ENCODE measurements at regions of chr20 and their contacts with region 1.

Region 1: GRCh38 chr20:64083378-64083803 is 807 bp downstream of the LKAAEAR1 start:
- DNase-seq: peak; percentile 59 to 97 (median 80)

Region 2: DNA sequence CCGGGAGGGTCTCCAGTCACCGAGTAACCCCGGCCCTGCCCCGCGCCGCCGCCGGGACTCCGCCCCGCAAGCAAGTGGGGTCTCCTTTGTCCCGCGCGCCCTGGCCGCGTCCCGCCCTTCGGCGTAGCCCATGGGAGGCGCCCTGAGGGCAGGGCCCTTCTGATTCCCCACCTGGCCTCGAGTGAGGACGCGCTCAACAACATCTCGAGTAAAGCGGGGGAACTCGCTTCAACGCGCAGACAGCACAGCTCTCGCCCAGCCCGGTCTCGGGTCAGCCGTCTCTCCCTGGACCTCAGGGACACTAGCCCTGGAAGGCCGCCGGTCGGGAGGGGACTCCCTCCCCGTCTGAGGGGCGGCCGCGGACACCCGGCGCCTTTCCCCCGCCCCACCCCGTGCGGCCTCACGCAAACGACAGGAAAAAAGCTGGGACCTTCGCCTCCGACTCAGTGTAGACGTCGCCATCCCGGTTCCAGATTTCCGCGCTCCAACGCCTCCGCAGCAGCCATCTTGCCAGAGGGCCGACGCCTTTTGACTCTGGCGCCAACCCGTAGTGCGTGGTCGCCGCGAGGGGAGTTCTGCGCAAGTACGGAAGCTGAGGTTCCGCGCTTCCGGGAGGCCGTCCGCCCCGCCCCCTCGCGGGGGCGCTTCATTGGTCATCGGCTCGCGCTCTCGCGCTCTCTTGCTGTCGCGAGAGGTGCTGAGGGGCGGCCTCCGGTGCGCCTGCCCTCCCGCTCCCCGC is 1145.9 kb before region 1 on chr20:
- intact Hi-C with region 1: no loop called
- DNase-seq: peak; percentile 87 to 99 (median 92)

Region 3: GRCh38 chr20:64053841-64054661 is 29.3 kb before region 1 on chr20:
- intact Hi-C with region 1: no loop called
- DNase-seq: no peak

Region 4: DNA sequence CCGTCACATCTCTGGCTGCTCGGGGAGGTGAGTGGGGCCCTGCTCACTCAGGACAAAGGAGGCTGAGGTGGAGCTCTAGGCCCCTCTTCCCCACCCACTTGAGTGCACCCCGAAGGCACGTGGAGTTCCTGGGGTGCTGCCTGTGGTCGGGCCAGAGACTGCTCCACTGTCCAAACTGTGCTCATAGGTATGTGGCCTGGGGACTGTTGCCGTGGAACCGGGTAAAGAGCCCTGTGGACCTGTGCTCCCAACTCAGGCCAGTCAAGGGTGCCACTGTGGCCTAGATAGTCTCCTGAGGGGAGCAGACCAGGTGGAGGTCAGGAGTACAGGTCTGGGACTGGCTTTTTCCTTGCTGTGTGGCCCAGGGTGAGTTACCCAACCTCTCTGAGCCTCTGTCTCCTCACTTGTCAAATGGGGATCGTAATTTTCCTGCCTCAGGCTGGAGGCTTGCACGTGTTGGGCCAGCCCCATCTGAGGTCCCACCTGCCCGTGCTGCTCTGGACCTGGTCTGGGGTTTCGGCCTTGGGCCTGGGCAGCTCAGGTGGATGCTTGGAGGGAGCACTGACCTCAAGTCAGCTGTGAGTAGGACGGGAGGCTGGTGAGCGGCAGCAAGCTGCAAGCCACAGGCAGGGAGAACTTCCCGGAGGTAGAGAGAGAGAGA is 36.4 kb after region 1 on chr20:
- intact Hi-C with region 1: loop called (anchors 1 kb)
- DNase-seq: peak in 2 of 10 donors; percentile 59 to 76

Region 5: GRCh38 chr20:64176548-64176947 is 93.2 kb after region 1 on chr20:
- intact Hi-C with region 1: no loop called
- DNase-seq: peak; percentile 43 to 92 (median 52)

Region 6: GRCh38 chr20:64279826-64280459 is 196.6 kb after region 1 on chr20:
- intact Hi-C with region 1: no loop called
- DNase-seq: peak in 1 of 10 donors; percentile 74

Measured in posterior cingulate gyrus (tissue), 11 donors.